ENCODE measurements at regions of chr9 and their contacts with region 1.

Region 1: GRCh38 chr9:88476491-88477271 is 58.3 kb upstream of the NXNL2 start:
- DNase-seq: peak; percentile 18
- ATAC-seq: peak; percentile 62
- H3K4me3 Mint-ChIP-seq: no peak overlapping the region
- H3K27ac Mint-ChIP-seq: peak overlapping the region; percentile 51
- H3K4me1 Mint-ChIP-seq: peaks cover 20% of the 10 kb centered on the region
- H3K27me3 Mint-ChIP-seq: no peaks in the 10 kb centered on the region

Region 2: GRCh38 chr9:87375397-87376073 is 1101.1 kb before region 1 on chr9:
- CTCF ChIA-PET with region 1: no interaction called
- POLR2A ChIA-PET with region 1: no interaction called
- intact Hi-C with region 1: loop called in 1 of 2 experiments (anchors 5 kb)
- DNase-seq: no peak
- ATAC-seq: no peak
- H3K4me3 Mint-ChIP-seq: no peak overlapping the region
- H3K27ac Mint-ChIP-seq: no peak overlapping the region
- H3K4me1 Mint-ChIP-seq: peaks cover 15% of the 10 kb centered on the region
- H3K27me3 Mint-ChIP-seq: peaks cover 37% of the 10 kb centered on the region

Region 3: DNA sequence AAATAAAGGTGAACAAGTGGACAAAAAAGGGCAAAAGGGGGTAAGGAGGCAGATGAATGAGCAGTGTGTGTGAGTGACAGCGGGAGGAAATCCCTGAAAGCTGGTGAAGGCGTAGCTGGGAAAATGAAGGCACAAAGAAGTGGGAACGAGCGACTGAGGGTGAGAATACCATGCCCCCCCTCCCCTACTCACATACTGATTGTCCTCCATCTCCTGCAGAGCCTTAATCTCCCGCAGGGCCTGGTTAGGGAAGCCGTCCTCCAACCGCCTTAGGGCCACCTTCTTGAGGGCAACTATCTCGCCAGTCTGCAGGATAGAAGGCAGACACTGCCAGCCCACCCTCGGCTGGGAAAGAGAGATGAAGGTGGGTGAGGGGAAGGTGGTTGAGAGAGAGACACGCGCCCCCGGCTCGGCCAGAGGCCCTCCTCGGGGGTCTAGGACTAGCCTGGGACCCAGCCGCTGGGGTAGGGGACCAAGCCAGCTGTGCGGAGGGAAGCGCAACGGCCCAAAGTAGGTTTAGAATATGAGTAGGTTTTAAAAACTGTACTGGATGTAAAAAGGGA is 502.9 kb before region 1 on chr9:
- CTCF ChIA-PET with region 1: no interaction called
- POLR2A ChIA-PET with region 1: no interaction called
- intact Hi-C with region 1: loop called in 1 of 2 experiments (anchors 1 kb)
- DNase-seq: peak; percentile 19
- ATAC-seq: no peak
- H3K4me3 Mint-ChIP-seq: peak overlapping the region; percentile 82
- H3K27ac Mint-ChIP-seq: peak overlapping the region; percentile 58
- H3K4me1 Mint-ChIP-seq: peaks cover 22% of the 10 kb centered on the region
- H3K27me3 Mint-ChIP-seq: no peaks in the 10 kb centered on the region

Region 4: DNA sequence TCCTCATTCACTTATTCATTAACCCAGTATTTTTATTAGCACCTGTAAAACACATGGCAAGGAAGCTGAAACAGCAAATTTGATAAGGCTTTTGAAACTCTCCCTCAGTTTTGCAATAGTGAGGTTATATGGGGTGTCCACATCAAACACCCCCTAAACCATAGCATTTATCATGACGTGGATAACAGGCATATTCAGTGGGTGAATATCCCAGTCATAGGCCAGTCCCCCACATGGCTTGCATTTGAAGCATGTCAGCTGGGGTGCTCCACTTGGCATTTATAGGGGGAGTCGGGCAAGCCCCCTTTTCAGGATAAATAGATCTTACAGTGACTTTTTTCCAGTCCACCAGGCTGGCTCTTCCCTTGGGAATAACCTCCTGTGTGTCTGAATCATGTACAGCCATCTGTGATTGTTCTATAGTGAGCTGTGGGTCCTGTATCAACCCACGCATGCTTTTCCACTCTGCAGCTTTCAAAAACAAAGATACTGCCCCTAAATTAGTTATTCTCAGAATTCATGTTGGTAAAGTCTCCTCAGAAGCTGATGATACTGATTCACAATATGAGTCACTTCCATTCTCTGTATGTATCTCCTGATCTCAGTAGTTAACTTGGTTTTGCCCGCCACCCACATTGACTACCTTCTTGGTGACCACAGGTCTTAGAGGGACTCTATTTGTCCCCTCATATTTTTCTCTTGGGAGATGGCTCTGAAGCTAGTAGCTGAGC is 172.8 kb before region 1 on chr9:
- CTCF ChIA-PET with region 1: no interaction called
- POLR2A ChIA-PET with region 1: no interaction called
- intact Hi-C with region 1: loop called (anchors 1 to 5 kb)
- DNase-seq: peak; percentile 81
- ATAC-seq: peak; percentile 91
- H3K4me3 Mint-ChIP-seq: no peak overlapping the region
- H3K27ac Mint-ChIP-seq: peak overlapping the region; percentile 68
- H3K4me1 Mint-ChIP-seq: peaks cover 27% of the 10 kb centered on the region
- H3K27me3 Mint-ChIP-seq: peaks cover 18% of the 10 kb centered on the region

Region 5: DNA sequence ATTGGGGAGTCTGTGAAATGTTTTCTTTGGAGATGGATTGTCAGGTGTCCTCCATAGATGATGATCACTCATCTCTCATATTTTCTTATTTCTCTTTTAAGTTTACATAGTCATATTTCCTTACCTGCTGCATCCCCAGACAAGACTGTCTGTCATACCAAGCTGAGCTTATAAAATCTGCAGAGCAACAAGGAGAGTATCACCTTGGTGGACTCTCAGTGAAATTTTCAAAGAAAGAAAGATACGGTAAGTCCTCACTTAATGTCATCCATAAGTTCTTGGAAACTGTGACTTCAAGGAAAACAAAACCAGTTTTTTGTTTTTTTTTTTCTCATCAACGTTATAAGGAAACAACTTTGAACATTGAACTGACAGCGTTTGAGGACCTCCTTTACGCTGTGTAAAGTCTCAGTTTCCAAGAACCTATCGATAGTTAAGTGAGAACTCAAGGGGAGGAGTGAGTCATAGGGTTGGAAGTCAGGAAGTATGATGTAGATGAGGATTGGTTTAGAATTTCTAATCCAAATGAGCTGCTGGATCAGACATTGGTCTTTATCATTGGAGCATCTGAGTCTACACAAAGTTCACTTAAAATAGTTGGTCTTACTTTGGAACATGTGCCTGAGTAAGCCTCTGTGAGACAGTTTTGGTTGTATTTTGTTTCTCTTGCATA is 43.0 kb before region 1 on chr9:
- CTCF ChIA-PET with region 1: no interaction called
- POLR2A ChIA-PET with region 1: no interaction called
- intact Hi-C with region 1: loop called in 1 of 2 experiments (anchors 2 kb)
- DNase-seq: no peak
- ATAC-seq: peak; percentile 90
- H3K4me3 Mint-ChIP-seq: no peak overlapping the region
- H3K27ac Mint-ChIP-seq: peak overlapping the region; percentile 84
- H3K4me1 Mint-ChIP-seq: peaks cover 25% of the 10 kb centered on the region
- H3K27me3 Mint-ChIP-seq: no peaks in the 10 kb centered on the region

Region 6: DNA sequence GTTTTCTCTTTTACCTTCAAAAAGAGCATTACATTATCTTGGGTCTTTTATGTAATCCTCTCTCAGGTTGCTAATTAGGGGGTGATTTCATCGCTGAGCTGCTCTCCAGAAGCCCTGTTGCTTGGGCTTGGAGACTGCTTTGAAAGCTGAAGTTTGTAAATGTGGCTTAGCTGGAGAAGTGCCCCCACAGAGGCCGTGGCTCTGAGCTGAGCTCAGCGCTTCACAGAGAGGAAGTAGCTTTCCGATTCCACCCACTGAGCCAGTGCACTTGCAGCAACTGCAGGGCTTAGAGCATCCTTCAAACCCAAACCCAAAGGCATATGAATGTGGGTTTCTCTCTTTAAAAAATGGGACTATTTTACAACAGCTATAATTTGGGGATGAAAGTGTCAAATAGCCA is 44.6 kb after region 1 on chr9:
- CTCF ChIA-PET with region 1: no interaction called
- POLR2A ChIA-PET with region 1: no interaction called
- intact Hi-C with region 1: no loop called
- DNase-seq: no peak
- ATAC-seq: no peak
- H3K4me3 Mint-ChIP-seq: no peak overlapping the region
- H3K27ac Mint-ChIP-seq: no peak overlapping the region
- H3K4me1 Mint-ChIP-seq: no peaks in the 10 kb centered on the region
- H3K27me3 Mint-ChIP-seq: peaks cover 7% of the 10 kb centered on the region

Region 7: GRCh38 chr9:89154651-89155336 is 678.1 kb after region 1 on chr9:
- CTCF ChIA-PET with region 1: no interaction called
- POLR2A ChIA-PET with region 1: no interaction called
- intact Hi-C with region 1: loop called in 1 of 2 experiments (anchors 10 kb)
- DNase-seq: peak; percentile 63
- ATAC-seq: peak; percentile 81
- H3K4me3 Mint-ChIP-seq: no peak overlapping the region
- H3K27ac Mint-ChIP-seq: no peak overlapping the region
- H3K4me1 Mint-ChIP-seq: peaks cover 24% of the 10 kb centered on the region
- H3K27me3 Mint-ChIP-seq: peaks cover 41% of the 10 kb centered on the region